ENCODE measurements at regions of chr3 and their contacts with region 1.

Region 1: DNA sequence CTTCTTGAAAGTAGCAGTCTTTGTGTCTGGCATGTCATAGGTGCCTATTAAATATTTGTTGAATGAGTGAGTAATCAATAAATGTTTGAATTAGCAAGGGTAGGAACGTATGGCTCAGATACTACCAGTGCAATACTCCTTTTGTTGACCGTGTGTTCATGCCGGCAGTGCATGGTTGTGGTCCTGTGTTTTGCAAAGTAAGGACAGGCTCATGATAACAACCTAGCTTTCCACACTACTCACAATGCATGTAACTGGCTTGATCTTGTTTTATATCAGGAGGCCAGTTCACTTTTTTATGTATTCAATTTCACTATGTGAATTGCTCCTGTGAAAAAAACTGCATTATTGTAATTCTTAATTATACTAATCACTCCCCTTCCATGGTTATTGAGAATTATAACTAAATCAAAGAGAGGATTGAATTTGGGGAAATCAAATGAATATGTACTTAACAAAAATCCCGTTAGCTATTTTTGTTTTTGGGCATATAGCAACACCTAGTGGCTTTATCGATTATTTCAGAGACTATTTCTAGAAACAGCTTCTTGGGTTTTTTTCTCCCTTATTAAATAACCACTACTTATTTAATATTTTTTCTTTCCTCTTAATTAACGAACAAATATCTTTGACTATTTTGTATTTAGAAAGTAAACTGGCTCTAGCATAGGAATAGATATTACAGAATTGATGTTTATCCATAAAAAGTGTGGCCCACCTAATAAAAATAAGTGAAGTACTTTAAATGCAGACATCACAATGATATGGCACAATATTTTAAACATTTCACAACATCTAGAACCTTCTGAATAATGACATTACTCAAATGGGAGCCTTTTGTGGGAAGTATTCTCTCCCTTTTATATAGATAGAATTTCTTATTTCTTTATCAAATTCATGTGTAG is 218.5 kb downstream of the BBX start:
- DNase-seq: no peak
- ATAC-seq: peak; percentile 43

Region 2: GRCh38 chr3:107235928-107236315 is 505.3 kb before region 1 on chr3:
- intact Hi-C with region 1: loop called (anchors 10 kb)
- DNase-seq: no peak
- ATAC-seq: peak; percentile 76

Region 3: GRCh38 chr3:107574650-107575049 is 166.6 kb before region 1 on chr3:
- intact Hi-C with region 1: loop called (anchors 10 kb)
- DNase-seq: no peak
- ATAC-seq: peak; percentile 69

Region 4: DNA sequence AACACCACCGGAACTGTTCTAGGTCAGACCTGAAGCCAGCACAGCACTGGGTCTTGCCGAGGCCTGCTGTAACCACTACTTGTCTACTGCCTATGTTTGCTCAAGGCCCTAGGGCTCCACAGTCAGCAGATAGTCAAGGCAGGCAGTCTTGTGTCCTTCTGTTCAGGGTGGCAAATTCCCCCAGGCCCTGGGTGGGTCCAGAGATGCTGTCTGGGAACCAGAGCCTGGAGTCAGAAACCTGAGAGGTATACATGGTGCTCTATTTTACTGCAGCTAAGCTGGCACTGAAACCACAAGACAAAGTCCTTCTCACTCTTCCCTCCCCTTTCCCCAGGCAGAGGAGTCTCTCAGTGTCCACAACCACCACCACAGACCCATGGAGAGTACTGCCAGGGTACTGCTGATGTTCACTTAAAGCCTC is 128.6 kb before region 1 on chr3:
- intact Hi-C with region 1: no loop called
- DNase-seq: no peak
- ATAC-seq: no peak

Region 5: DNA sequence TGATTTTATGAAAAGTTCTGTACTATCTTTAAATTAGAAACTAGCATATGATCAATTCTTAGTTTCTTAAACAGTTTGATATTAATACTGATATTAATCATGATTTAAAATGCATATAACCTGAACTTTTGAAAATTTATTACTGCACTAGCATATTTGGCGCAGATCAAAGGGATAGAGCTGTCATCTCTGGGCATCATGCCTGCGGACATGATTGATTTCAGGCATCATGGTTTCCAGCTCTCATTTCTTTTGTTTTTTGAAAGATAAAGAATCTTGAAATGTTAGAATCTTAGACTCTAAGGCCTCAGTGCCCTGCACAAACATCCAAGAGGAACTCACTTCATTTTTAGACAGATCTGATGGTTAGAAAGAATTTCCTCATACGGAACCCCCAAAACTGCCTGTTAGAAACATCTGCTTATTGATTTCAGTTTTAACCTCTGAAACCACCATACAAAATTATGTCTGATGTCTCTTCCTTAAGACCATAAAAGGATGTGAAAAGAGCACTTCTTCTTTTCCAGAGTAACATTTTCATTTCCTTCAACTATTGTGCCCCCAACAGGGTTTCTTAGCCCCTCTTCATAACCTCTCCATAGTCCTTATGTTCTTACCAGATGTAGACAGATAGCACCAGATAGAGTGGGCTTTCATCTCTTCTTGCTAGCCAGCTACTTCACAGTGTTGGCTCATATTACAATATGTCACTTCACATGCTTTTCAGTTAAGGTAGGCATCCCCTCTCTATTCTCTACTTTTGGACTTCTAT is 107.7 kb before region 1 on chr3:
- intact Hi-C with region 1: no loop called
- DNase-seq: no peak
- ATAC-seq: no peak

Region 6: DNA sequence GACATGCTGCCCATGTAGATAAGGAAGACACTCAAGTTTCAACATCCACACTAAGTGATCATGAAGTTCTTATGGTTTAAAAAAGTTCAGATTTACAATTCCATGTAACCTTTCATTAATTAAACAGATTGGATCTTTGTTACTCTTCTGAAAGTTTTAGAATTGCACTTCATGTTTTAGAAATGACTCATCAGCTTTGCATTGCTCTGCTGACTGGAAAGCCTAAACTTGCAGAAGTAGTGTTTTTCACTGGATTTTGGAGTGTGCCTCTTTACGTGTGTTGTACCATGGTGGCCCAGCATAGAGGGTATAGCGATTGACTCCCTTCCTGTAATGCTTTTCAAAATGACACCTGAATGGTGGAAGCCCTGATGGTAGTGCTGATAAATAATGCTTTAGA is 60.5 kb before region 1 on chr3:
- intact Hi-C with region 1: loop called (anchors 5 kb)
- DNase-seq: no peak
- ATAC-seq: no peak